Activated naive CD4-positive, alpha-beta T cell treated with anti-CD3 and anti-CD28 coated beads for 36 hours (primary cell): ENCODE measurements at regions of chr17 and their contacts with region 1.

Region 1: GRCh38 chr17:13594762-13595598 is 6.7 kb downstream of the HS3ST3A1 start:
- DNase-seq: peak; percentile 89
- H3K4me3 Mint-ChIP-seq: no peak overlapping the region
- H3K27ac Mint-ChIP-seq: no peak overlapping the region
- H3K4me1 Mint-ChIP-seq: peaks cover 2% of the 10 kb centered on the region
- H3K27me3 Mint-ChIP-seq: peaks cover 21% of the 10 kb centered on the region

Region 2: DNA sequence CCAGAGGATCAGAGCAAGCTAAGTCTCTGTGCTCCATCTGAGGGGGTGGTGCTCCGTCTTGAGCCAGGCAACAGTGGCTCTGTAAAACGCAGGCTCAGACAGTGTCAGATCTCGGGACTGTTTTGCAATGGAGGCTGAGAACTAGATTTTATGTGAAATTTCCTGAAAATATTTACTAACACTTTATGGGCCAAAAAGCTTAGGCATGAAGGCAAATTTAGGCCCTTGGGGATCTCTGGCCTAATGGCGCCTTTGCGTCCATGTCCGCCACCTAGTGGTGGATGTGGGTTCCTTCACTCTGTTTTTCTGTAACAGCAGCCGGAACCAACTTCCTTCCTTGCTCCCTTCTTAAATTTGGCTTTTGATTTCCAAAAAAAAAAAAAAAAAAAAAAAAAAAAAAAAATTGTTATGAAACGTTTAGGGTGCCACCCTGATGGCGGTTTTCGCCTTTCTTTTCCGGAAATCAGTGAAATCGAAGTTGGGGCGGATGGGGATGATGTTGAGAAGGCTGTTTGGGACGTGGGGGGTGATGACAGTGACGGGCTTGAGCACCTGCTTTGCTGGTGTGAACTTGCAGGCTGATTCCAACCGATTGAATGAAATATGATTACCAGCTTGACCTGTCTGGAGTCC is 563.1 kb before region 1 on chr17:
- CTCF ChIA-PET with region 1: no interaction called
- intact Hi-C with region 1: loop called (anchors 2 kb)
- DNase-seq: peak; percentile 63
- H3K4me3 Mint-ChIP-seq: no peak overlapping the region
- H3K27ac Mint-ChIP-seq: no peak overlapping the region
- H3K4me1 Mint-ChIP-seq: peaks cover 11% of the 10 kb centered on the region
- H3K27me3 Mint-ChIP-seq: no peaks in the 10 kb centered on the region

Region 3: GRCh38 chr17:13917634-13918033 is 322.7 kb after region 1 on chr17:
- CTCF ChIA-PET with region 1: no interaction called
- intact Hi-C with region 1: loop called (anchors 10 kb)
- DNase-seq: no peak
- H3K4me3 Mint-ChIP-seq: no peak overlapping the region
- H3K27ac Mint-ChIP-seq: no peak overlapping the region
- H3K4me1 Mint-ChIP-seq: no peaks in the 10 kb centered on the region
- H3K27me3 Mint-ChIP-seq: no peaks in the 10 kb centered on the region

Region 4: DNA sequence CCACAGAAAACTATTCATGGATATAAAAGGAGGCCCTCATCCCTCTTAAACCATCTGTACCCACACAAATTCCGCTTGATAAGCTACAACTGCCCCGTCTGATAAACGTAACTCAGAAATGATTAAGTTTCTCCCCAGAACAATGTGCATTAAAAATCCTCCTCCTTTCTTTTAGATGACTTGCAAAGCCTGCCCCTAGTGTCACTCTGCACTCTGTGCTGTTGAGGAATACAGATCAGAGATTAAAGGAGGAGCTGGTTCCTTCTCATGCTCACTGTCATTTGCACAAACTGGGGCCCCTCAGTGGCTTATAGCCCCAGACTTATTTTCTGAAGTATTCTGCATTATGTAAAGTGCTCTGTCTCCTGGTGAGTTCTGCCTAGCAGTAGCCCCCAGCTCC is 608.4 kb after region 1 on chr17:
- CTCF ChIA-PET with region 1: no interaction called
- intact Hi-C with region 1: loop called (anchors 5 kb)
- DNase-seq: peak; percentile 67
- H3K4me3 Mint-ChIP-seq: no peak overlapping the region
- H3K27ac Mint-ChIP-seq: peak overlapping the region; percentile 94
- H3K4me1 Mint-ChIP-seq: peaks cover 85% of the 10 kb centered on the region
- H3K27me3 Mint-ChIP-seq: no peaks in the 10 kb centered on the region

Region 5: GRCh38 chr17:14784997-14785696 is 1190.2 kb after region 1 on chr17:
- CTCF ChIA-PET with region 1: no interaction called
- intact Hi-C with region 1: loop called (anchors 1 kb)
- DNase-seq: peak; percentile 47
- H3K4me3 Mint-ChIP-seq: no peak overlapping the region
- H3K27ac Mint-ChIP-seq: no peak overlapping the region
- H3K4me1 Mint-ChIP-seq: no peaks in the 10 kb centered on the region
- H3K27me3 Mint-ChIP-seq: peaks cover 7% of the 10 kb centered on the region

Region 6: DNA sequence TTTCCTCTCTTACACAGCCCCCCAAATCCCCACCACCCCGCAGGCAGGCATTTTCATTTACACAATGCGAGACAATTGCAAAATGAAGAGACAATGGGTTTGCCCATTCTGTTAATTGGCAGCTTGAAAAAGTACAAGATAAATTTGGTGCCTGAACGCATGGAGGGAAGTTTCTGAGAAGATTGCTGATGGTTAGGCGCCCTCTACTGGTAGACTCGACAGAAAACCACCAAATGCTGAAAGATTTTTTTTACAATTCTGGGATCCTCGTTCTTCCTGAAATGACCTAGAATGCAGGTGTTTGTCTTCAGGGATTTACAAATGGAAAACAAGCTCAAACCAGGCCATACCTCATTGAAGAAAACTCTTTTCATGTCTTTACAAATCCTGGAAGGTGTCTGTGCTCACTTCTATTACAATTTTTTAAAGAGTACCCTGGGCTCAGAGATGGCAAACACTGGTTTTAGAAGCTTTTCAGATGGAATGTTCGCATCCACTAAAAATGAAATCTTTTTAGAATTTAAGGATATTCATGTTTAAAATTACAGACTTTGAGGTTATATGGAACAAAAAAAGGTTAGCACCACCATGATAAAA is 1331.6 kb after region 1 on chr17:
- CTCF ChIA-PET with region 1: interaction called, 6 read pairs
- intact Hi-C with region 1: loop called (anchors 1 kb)
- DNase-seq: peak; percentile 72
- H3K4me3 Mint-ChIP-seq: no peak overlapping the region
- H3K27ac Mint-ChIP-seq: no peak overlapping the region
- H3K4me1 Mint-ChIP-seq: no peaks in the 10 kb centered on the region
- H3K27me3 Mint-ChIP-seq: peaks cover 10% of the 10 kb centered on the region